Calu3 (cell line): ENCODE measurements at regions of chr1 and their contacts with region 1.

Region 1: GRCh38 chr1:65825741-65826140 is 33.0 kb downstream of the PDE4B start:
- DNase-seq: no peak
- H3K4me3 Mint-ChIP-seq: no peak overlapping the region
- H3K27ac Mint-ChIP-seq: no peak overlapping the region
- H3K4me1 Mint-ChIP-seq: no peaks in the 10 kb centered on the region
- H3K27me3 Mint-ChIP-seq: no peaks in the 10 kb centered on the region
- CTCF ChIP-seq: no peak

Region 2: GRCh38 chr1:65355031-65355712 is 470.6 kb before region 1 on chr1:
- CTCF ChIA-PET with region 1: interaction called, 10 read pairs
- intact Hi-C with region 1: no loop called
- DNase-seq: no peak
- H3K4me3 Mint-ChIP-seq: no peak overlapping the region
- H3K27ac Mint-ChIP-seq: no peak overlapping the region
- H3K4me1 Mint-ChIP-seq: no peaks in the 10 kb centered on the region
- H3K27me3 Mint-ChIP-seq: no peaks in the 10 kb centered on the region
- CTCF ChIP-seq: no peak

Region 3: GRCh38 chr1:65572701-65573421 is 252.9 kb before region 1 on chr1:
- CTCF ChIA-PET with region 1: no interaction called
- intact Hi-C with region 1: no loop called
- DNase-seq: no peak
- H3K4me3 Mint-ChIP-seq: no peak overlapping the region
- H3K27ac Mint-ChIP-seq: no peak overlapping the region
- H3K4me1 Mint-ChIP-seq: no peaks in the 10 kb centered on the region
- H3K27me3 Mint-ChIP-seq: no peaks in the 10 kb centered on the region
- CTCF ChIP-seq: no peak